Activated CD4-positive, alpha-beta T cell treated with anti-CD3 and anti-CD28 coated beads for 36 hours (primary cell): ENCODE measurements at regions of chr10 and their contacts with region 1.

Region 1: GRCh38 chr10:2456834-2457233 is 610.5 kb upstream of the PFKP start:
- DNase-seq: no peak
- ATAC-seq: no peak
- H3K4me3 Mint-ChIP-seq: no peak overlapping the region
- H3K27ac Mint-ChIP-seq: no peak overlapping the region
- H3K4me1 Mint-ChIP-seq: no peaks in the 10 kb centered on the region
- H3K27me3 Mint-ChIP-seq: no peaks in the 10 kb centered on the region

Region 2: GRCh38 chr10:2414562-2414961 is 42.3 kb before region 1 on chr10:
- CTCF ChIA-PET with region 1: no interaction called
- POLR2A ChIA-PET with region 1: no interaction called
- intact Hi-C with region 1: loop called in 1 of 2 experiments (anchors 1 kb)
- DNase-seq: no peak
- ATAC-seq: no peak
- H3K4me3 Mint-ChIP-seq: no peak overlapping the region
- H3K27ac Mint-ChIP-seq: no peak overlapping the region
- H3K4me1 Mint-ChIP-seq: no peaks in the 10 kb centered on the region
- H3K27me3 Mint-ChIP-seq: no peaks in the 10 kb centered on the region